Lower leg skin (tissue), 4 donors: ENCODE measurements at regions of chr2 and their contacts with region 1.

Region 1: DNA sequence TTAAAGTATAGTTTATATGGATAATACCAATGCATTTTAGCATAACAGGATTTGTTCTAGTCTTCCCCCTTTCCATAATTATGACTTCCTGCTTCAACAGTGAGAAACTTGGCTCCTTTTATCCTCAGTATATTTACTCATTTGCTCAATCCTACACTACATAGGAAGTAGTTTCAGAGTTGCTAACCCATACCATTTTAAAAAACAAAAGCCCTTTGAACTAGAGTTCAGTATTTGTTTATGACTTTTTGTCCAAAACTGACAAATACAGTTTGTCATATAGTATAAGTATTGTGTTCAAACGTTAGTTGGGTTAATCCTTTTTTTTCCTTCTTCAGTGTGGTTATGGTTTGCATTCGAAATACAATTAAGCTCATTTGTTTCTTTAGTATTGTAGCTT is 5.9 kb upstream of the DNAJC27 start:
- DNase-seq: no peak
- H3K4me3 ChIP-seq: no peak overlapping the region
- CTCF ChIP-seq: no peak
- POLR2A ChIP-seq: no peak

Region 2: DNA sequence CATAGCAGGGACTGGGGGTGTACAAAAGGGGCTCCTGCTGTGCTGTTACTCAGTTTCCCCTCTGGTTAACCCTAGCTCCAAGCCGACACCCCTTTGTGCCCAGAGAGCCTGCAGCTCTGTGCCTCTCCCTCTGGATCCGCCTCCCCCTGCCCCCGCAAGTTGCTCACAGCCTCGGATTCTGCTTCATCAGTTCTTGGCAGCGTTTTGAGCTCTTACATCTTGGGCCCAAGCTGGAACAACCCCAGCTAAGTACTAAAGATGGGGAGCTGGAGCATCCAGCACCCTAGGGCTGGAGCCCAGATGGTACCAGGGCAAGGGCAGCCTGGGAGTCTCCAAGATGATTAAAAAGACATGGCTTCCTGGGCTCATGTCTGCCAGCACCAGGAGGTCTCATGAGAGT is 150.0 kb after region 1 on chr2:
- intact Hi-C with region 1: loop called (anchors 5 kb)
- DNase-seq: no peak
- H3K4me3 ChIP-seq: no peak overlapping the region
- CTCF ChIP-seq: no peak
- POLR2A ChIP-seq: no peak